Activated CD4-positive, alpha-beta T cell treated with anti-CD3 and anti-CD28 coated beads for 36 hours (primary cell): ENCODE measurements at regions of chr13 and their contacts with region 1.

Region 1: DNA sequence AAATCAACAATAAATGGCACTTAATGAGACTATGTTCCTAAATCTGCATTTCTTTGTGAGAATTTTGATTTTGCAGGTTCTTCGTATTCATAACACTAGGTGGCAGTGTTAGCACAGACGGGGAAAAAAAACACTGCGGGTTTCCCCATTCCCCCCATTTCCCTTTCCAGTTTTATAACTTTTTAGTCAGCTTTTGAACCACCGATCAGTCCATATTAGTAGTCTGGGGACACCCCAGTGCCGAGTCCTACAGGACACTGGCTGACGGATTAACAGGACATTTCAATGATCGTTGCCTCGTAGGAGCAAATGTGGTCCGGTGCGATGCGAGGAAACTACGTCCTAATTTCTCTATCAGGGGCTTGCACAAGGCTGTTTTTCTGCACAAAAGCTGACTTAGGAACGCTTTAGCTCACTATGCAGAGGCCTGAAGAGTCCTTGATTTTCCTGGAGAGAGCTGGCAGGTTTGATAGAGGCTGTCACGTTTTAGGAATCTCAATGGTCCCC is 234.3 kb downstream of the LMO7 start:
- DNase-seq: peak; percentile 10
- ATAC-seq: peak; percentile 27
- H3K4me3 Mint-ChIP-seq: no peak overlapping the region
- H3K27ac Mint-ChIP-seq: peak overlapping the region; percentile 58
- H3K4me1 Mint-ChIP-seq: peaks cover 19% of the 10 kb centered on the region
- H3K27me3 Mint-ChIP-seq: peaks cover 8% of the 10 kb centered on the region

Region 2: DNA sequence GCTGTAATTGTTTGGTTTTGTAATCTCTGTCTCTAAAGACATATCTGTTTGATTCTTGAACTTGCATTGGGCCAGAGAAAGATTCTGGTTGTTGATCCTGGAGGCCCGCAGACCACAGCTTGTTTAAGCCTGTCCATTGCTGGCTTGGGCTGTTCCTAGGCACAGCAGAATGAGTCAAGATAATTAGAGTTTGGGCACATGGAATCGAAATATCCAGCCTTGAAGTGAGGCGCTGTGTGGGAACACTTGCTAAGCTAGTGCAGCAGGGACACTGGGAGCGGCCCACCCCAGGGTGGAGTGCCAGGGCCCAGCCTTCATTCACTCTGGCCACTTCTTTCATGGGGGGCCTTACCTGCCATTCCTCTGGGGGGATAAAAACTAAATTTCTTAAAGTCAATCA is 14.6 kb before region 1 on chr13:
- CTCF ChIA-PET with region 1: interaction called, 22 read pairs
- POLR2A ChIA-PET with region 1: no interaction called
- intact Hi-C with region 1: no loop called
- DNase-seq: no peak
- ATAC-seq: no peak
- H3K4me3 Mint-ChIP-seq: no peak overlapping the region
- H3K27ac Mint-ChIP-seq: no peak overlapping the region
- H3K4me1 Mint-ChIP-seq: no peaks in the 10 kb centered on the region
- H3K27me3 Mint-ChIP-seq: no peaks in the 10 kb centered on the region

Region 3: DNA sequence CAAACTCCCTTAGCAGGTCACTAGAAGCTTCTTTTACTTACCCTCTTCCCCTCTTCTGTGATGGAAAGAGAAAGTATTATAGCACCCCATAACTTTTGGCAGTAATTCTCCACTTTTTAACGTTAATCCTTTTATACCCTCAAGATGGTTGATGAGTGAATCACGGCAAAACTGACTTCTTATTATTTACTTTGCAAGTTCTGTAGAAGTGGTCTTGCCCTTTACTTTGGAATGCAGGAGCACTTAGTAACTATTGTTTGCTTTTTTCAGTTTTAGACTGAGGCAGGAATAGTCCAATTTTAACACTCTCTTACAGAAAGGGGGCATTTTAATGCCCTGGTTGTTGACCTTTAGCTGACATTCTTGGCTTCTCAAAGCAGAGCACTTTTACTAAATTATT is 25.8 kb after region 1 on chr13:
- CTCF ChIA-PET with region 1: interaction called, 10 read pairs
- POLR2A ChIA-PET with region 1: no interaction called
- intact Hi-C with region 1: no loop called
- DNase-seq: no peak
- ATAC-seq: no peak
- H3K4me3 Mint-ChIP-seq: no peak overlapping the region
- H3K27ac Mint-ChIP-seq: no peak overlapping the region
- H3K4me1 Mint-ChIP-seq: no peaks in the 10 kb centered on the region
- H3K27me3 Mint-ChIP-seq: peaks cover 2% of the 10 kb centered on the region